Gastrocnemius medialis (tissue), 4 donors: ENCODE measurements at regions of chr7 and their contacts with region 1.

Region 1: DNA sequence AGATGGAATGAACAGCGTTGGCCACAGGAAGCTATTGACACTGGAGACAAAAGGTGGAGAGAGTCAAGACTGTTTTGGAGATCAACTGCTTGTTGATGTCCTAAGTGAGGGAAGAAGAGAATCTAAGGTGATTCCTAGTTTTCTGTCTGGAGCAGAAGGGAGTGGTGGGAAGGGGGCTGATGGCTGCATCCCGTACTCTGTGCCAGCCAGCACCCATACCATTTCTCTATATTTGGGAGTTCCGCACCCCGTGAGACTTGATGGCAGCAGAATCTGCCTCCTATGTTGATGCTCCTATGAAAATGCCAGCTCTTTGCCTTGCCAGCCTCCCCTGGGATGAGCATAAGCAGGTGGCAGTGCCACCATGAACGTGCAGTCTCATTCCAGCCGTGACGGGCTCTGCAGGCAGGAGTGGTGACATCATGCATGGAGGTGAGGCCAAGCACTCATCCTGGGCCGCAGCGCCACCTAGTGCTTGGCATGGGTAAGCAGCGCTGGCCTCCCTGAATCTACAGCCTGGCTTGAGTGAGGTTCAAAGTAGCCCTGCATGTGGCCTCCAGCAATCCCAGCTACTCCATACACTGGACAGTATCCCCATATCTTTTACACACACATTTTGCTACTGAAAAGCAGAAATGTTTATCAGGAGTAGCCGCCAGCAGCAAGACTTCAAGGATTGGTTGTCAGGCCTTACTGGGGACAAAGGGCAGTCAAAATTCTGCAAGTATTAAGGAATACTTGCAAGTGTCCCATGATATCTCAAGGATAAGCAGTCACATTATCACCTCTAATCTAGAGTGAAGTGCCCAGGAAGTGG is 43.0 kb downstream of the PODXL start:
- DNase-seq: peak; percentile 73 to 89
- ATAC-seq: peak; percentile 74 to 91
- H3K4me3 ChIP-seq: no peak overlapping the region
- H3K27ac ChIP-seq: peak overlapping the region; percentile 57 to 74 (median 66)
- H3K4me1 ChIP-seq: peaks cover 14 to 27% of the 10 kb centered on the region in 2 donors
- H3K27me3 ChIP-seq: no peaks in the 10 kb centered on the region
- CTCF ChIP-seq: peak; percentile 83 to 93 (median 93)
- POLR2A ChIP-seq: no peak

Region 2: DNA sequence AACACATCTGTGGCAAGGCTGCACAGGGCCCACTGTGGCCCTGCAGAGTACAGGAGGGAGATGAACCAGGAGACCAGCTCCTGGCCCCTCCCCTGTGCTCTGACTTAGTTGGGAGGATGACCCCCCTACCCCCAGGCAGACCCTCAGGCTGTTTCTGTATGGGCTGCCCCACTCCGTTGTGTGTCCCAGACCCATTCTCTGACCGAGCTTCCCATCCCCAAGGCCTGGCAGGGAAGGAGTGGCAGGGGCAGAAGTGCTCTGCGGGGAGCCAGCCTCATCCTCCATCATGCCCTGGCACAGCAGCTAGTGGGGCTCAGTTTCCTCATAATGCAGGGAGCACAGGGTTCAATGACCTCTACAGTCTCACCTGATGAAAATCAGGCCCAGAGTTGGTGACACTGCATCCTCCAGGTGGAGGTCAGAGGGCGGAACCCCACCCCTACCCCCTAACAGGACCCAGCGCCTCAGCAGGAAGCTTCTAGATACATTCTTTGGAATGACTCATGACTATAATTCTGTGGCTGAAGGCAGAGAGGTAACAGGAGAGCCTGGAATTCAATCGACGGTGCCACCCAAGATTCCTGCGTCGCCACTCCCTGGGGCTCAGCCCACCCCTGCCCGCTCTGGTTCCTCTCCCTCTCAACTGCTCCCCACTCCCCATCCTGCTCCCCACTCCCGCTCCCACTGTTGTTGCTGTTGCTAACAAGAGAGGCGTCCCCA is 24.8 kb after region 1 on chr7:
- in situ Hi-C with region 1: no loop called
- intact Hi-C with region 1: loop called (anchors 2 kb)
- DNase-seq: peak in 1 of 2 donors; percentile 45
- ATAC-seq: peak; percentile 66 to 82
- H3K4me3 ChIP-seq: no peak overlapping the region
- H3K27ac ChIP-seq: peak overlapping the region; percentile 76 to 82 (median 79)
- H3K4me1 ChIP-seq: peaks cover 41 to 61% of the 10 kb centered on the region in 2 donors
- H3K27me3 ChIP-seq: no peaks in the 10 kb centered on the region
- CTCF ChIP-seq: no peak
- POLR2A ChIP-seq: no peak